ENCODE measurements at regions of chr11 and their contacts with region 1.

Region 1: GRCh38 chr11:6682936-6683861 is at the start of gene MRPL17:
- DNase-seq: peak; percentile 99 to 100 (median 100)
- ATAC-seq: peak; percentile 98 to 99 (median 98)
- H3K4me3 ChIP-seq: peak within 1 kb of the TSS; percentile 64 to 96 (median 77)
- H3K27ac ChIP-seq: peak within 1 kb of the TSS; percentile 58 to 97 (median 90)
- H3K4me1 ChIP-seq: peaks cover 4 to 35% (median 19%) of the 10 kb centered on the region in 12 donors
- H3K27me3 ChIP-seq: no peaks in the 10 kb centered on the region
- CTCF ChIP-seq: peak; percentile 84 to 98 (median 92)
- POLR2A ChIP-seq: peak in 1 of 2 donors; percentile 89
- total RNA-seq, gene MRPL17: 31.0 to 58.0 (median 47.7) TPM

Region 2: DNA sequence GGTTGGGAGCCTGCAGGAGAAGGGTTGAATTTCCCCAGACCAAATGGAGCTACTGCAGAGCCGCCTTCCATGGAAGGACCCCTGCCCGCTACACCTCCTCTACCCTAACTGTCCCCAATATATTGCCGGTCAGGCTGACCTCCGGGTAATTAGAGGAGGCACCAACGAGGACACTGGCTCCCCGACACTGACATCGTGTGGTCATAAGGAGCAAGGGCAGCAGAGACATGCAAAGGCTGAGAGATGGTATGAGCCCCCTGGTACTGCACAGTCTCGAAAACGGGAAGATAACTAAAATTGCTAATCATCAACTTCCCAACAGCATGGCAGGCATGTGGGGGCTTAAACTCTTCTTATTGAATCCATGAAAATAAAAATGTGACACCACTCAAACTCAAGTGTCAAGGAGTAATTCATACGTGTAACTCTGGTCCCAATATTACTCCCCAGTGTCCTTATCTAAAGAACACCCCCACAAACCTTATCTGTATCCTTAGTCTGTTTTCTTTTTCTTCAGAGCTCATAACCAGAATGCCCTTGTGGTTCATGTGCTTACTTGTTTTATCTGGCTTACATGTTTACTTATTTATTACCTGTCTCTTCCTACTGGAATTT is 367.3 kb before region 1 on chr11:
- intact Hi-C with region 1: loop called in 1 of 10 experiments (anchors 10 kb)
- DNase-seq: peak; percentile 54 to 74 (median 59)
- ATAC-seq: peak in 3 of 4 donors; percentile 11 to 30 (median 18)
- H3K4me3 ChIP-seq: peak overlapping the region in 7 of 12 donors; percentile 6 to 42 (median 24)
- H3K27ac ChIP-seq: peak overlapping the region in 3 of 12 donors; percentile 14 to 52 (median 27)
- H3K4me1 ChIP-seq: peaks cover 0 to 42% (median 26%) of the 10 kb centered on the region in 12 donors
- H3K27me3 ChIP-seq: peaks cover 0 to 8% (median 0%) of the 10 kb centered on the region in 9 donors
- CTCF ChIP-seq: peak; percentile 75 to 92 (median 84)
- POLR2A ChIP-seq: no peak

Region 3: DNA sequence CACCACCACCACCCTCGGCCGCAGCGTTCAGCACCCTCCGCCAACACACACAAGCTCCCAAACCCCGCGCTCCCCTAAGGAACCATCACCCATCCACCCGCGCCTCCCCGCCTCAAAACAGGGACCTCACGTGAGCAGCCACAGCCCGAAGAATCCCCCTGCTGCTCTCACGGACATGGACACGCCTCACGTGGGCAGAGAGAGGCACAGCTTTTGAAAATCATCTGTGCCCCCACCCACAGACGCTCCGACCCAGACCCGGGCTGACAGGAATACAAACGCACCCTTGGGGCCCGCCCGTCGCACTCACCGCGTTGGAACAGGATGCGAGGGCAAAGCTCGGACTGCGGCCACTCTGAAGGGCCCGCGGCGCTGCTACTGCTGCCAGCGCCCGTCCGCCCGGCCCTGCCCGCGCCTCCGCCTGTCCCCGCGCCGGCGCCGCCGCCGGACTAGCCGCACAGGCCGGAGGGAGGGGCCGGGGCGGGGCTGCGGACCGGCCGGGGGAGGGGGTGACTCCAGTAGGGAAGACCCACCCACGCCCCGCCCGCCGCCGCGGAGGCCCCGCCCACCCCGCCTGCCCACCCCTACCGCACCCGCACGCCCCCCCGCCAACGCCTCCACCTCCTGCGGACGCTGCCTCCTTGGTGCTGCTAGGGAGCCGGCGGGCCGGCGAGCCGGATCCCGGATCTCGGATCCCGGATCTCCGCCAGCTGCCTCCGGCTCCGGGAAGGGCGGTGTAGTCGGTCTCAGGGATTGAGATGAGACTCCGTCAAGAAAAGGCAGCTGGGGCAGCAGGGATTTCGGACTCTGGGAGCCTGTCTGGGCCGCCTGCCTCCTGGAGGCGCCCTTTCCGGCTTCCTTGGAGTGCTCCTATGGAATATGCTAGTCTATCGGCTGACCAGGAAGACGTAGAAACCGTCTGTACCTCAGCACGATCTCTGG is 209.4 kb before region 1 on chr11 and contains the start of gene TRIM3:
- intact Hi-C with region 1: loop called in 1 of 10 experiments (anchors 5 kb)
- DNase-seq: peak; percentile 96 to 97 (median 96)
- ATAC-seq: peak; percentile 70 to 93 (median 88)
- H3K4me3 ChIP-seq: peak within 1 kb of the TSS; percentile 62 to 99 (median 86)
- H3K27ac ChIP-seq: peak within 1 kb of the TSS; percentile 84 to 97 (median 93)
- H3K4me1 ChIP-seq: peaks cover 0 to 35% (median 19%) of the 10 kb centered on the region in 12 donors
- H3K27me3 ChIP-seq: no peaks in the 10 kb centered on the region
- CTCF ChIP-seq: peak in 4 of 12 donors; percentile 23 to 47 (median 40)
- POLR2A ChIP-seq: peak; percentile 83 to 87
- total RNA-seq, gene TRIM3: 7.7 to 18.8 (median 10.4) TPM

Region 4: DNA sequence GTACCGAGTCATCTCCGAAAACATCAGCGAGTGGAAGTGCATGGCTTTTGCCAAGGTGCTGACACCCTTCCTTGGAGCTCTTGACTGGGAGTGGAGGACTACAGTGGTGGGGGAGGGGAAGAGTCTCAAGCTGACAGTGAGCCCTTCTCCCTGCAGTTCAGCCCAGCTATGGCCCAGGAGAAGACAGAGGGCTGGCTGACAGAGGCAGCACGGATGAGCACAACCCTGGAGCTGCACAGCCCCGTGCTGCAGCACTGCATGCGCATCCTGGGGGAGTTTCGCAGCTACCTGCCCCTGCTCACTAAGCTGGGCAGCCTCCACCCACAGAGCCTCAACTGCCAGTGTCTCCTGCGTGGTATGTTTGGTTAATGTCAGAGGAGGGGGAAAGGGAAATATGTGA is 144.7 kb before region 1 on chr11:
- intact Hi-C with region 1: loop called in 5 of 10 experiments (anchors 5 kb)
- DNase-seq: no peak
- ATAC-seq: peak in 1 of 4 donors; percentile 23
- H3K4me3 ChIP-seq: no peak overlapping the region
- H3K27ac ChIP-seq: no peak overlapping the region
- H3K4me1 ChIP-seq: no peaks in the 10 kb centered on the region
- H3K27me3 ChIP-seq: no peaks in the 10 kb centered on the region
- CTCF ChIP-seq: no peak
- POLR2A ChIP-seq: no peak

Region 5: GRCh38 chr11:6612213-6613041 is 70.8 kb before region 1 on chr11 and contains the start of gene TAF10:
- intact Hi-C with region 1: loop called in 9 of 10 experiments (anchors 1 to 5 kb)
- DNase-seq: peak; percentile 99
- ATAC-seq: peak; percentile 94 to 96 (median 95)
- H3K4me3 ChIP-seq: peak within 1 kb of the TSS; percentile 52 to 93 (median 78)
- H3K27ac ChIP-seq: peak within 1 kb of the TSS; percentile 90 to 100 (median 98)
- H3K4me1 ChIP-seq: peaks cover 3 to 72% (median 35%) of the 10 kb centered on the region in 12 donors
- H3K27me3 ChIP-seq: no peaks in the 10 kb centered on the region
- CTCF ChIP-seq: peak in 11 of 12 donors; percentile 6 to 49 (median 36)
- POLR2A ChIP-seq: peak in 1 of 2 donors; percentile 94
- total RNA-seq, gene TAF10: 42.3 to 153 (median 99.0) TPM

Region 6: GRCh38 chr11:6635082-6635932 is 47.9 kb before region 1 on chr11:
- intact Hi-C with region 1: loop called in 1 of 10 experiments (anchors 2 kb)
- DNase-seq: peak; percentile 67 to 84 (median 77)
- ATAC-seq: peak; percentile 39 to 77 (median 62)
- H3K4me3 ChIP-seq: no peak overlapping the region
- H3K27ac ChIP-seq: peak overlapping the region; percentile 2 to 94 (median 68)
- H3K4me1 ChIP-seq: peaks cover 0 to 70% (median 57%) of the 10 kb centered on the region in 12 donors
- H3K27me3 ChIP-seq: no peaks in the 10 kb centered on the region
- CTCF ChIP-seq: no peak
- POLR2A ChIP-seq: no peak